Sigmoid colon (tissue), 7 donors: ENCODE measurements at regions of chr6 and their contacts with region 1.

Region 1: DNA sequence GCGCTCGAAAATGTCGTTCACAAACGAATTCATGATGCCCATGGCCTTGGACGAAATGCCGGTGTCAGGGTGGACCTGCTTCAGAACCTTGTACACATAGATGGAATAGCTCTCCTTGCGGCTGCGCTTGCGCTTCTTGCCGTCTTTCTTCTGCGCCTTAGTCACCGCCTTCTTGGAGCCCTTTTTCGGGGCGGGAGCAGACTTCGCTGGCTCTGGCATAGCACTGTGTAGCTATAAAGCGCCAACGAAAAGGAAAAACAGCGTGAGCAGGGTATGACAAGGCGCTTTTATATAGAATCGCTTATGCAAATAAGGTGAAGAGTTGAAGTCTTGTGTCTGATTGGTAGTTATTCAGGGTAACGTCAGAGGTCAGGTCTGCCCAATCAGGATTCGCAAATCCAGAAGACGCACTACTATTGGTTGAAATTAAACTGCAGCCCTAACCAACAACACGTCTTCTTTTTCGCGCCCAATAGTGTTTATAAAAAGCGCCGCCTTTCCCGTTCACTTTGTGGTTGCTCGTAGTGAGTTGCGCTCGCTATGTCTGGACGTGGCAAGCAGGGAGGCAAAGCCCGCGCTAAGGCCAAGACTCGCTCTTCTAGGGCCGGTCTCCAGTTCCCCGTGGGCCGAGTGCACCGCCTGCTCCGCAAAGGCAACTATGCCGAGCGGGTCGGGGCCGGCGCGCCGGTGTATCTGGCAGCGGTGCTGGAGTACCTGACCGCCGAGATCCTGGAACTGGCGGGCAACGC is 114.8 kb upstream of the PRSS16 start:
- DNase-seq: peak; percentile 96
- H3K4me3 ChIP-seq: peak overlapping the region; percentile 38 to 55 (median 52)
- H3K27ac ChIP-seq: peak overlapping the region; percentile 87 to 95 (median 92)
- H3K4me1 ChIP-seq: peaks cover 0 to 22% (median 11%) of the 10 kb centered on the region in 4 donors
- H3K27me3 ChIP-seq: no peaks in the 10 kb centered on the region
- CTCF ChIP-seq: no peak
- EP300 ChIP-seq: no peak
- POLR2A ChIP-seq: peak; percentile 93 to 95

Region 2: DNA sequence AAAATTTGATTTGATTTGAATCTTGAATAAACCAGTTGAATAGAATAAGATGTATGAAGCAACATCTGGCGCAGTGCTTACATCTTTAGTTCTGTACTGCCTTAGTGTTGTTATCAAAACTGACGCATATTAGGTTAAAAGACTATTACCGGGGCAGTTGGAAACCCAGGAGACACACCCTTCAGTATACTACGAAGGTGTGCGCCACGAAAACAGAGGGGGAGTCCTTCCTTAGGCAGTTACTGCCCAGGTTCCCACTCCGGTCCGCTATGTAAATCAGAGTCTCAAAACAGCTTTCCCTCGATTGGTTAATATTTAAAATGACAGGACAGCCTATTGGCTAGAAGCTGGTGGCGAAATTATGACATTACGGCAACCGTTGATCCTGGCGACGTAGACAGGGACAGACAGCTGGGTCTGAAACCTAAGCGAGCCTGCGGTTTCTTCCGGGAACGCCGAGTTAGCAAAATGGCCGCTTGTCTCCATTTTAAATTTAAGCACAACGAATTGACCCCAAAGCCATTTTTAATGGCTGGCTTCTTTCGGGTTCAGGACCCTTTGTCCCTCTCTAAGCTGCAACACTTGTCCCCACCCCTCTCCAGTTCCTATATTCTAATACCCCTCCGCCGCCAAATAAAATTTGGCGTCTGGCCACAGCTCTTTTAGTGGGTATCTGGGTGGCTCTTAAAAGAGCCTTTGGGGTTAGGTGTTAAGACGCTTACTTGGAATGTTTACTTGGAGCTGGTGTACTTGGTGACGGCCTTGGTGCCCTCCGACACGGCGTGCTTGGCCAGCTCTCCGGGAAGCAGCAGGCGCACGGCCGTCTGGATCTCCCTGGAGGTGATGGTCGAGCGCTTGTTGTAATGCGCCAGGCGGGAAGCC is 1009.7 kb before region 1 on chr6:
- intact Hi-C with region 1: loop called (anchors 10 kb)
- DNase-seq: peak; percentile 98
- H3K4me3 ChIP-seq: peak overlapping the region; percentile 80 to 94 (median 90)
- H3K27ac ChIP-seq: peak overlapping the region; percentile 96 to 99 (median 98)
- H3K4me1 ChIP-seq: peaks cover 0 to 21% (median 17%) of the 10 kb centered on the region in 4 donors
- H3K27me3 ChIP-seq: no peaks in the 10 kb centered on the region
- CTCF ChIP-seq: no peak
- EP300 ChIP-seq: peak; percentile 72 to 92 (median 89)
- POLR2A ChIP-seq: peak; percentile 84 to 91

Region 3: GRCh38 chr6:26204332-26205165 is 928.2 kb before region 1 on chr6:
- intact Hi-C with region 1: loop called (anchors 10 kb)
- DNase-seq: peak; percentile 99
- H3K4me3 ChIP-seq: peak overlapping the region; percentile 61 to 75 (median 65)
- H3K27ac ChIP-seq: peak overlapping the region; percentile 95 to 98 (median 98)
- H3K4me1 ChIP-seq: peaks cover 0 to 29% (median 16%) of the 10 kb centered on the region in 4 donors
- H3K27me3 ChIP-seq: no peaks in the 10 kb centered on the region
- CTCF ChIP-seq: peak in 2 of 4 experiments; percentile 8 to 34
- EP300 ChIP-seq: peak in 3 of 4 donors; percentile 67 to 81 (median 81)
- POLR2A ChIP-seq: peak; percentile 99

Region 4: DNA sequence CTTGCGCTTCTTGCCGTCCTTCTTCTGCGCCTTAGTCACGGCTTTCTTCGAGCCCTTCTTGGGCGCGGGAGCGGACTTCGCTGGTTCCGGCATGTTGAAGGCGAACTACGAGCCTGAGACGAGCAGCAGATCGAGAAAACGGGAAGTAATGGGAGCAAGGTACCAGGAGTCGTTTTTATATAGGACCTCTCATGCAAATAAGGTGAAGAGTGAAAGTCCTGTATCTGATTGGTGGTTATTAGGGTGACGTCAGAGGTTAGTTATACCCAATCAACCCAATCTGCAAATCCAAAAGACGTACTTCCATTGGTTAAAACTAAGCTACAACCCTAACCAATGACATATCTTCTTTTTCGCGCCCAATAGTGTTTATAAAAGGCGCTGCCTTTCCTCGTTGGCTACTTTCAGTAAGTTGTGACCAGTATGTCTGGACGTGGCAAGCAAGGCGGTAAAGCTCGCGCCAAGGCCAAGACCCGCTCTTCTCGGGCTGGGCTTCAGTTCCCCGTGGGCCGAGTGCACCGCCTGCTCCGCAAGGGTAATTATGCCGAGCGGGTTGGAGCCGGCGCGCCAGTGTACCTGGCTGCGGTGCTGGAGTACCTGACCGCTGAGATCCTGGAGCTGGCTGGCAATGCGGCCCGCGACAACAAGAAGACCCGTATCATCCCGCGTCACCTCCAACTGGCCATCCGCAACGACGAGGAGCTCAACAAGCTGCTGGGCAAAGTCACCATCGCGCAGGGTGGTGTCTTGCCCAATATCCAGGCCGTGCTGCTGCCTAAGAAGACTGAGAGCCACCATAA is 14.2 kb after region 1 on chr6:
- intact Hi-C with region 1: loop called (anchors 2 kb)
- DNase-seq: peak; percentile 92
- H3K4me3 ChIP-seq: peak overlapping the region; percentile 50 to 59 (median 56)
- H3K27ac ChIP-seq: peak overlapping the region; percentile 86 to 94 (median 91)
- H3K4me1 ChIP-seq: peaks cover 0 to 26% (median 20%) of the 10 kb centered on the region in 4 donors
- H3K27me3 ChIP-seq: no peaks in the 10 kb centered on the region
- CTCF ChIP-seq: no peak
- EP300 ChIP-seq: peak in 1 of 4 donors; percentile 20
- POLR2A ChIP-seq: peak; percentile 95 to 96

Region 5: GRCh38 chr6:27479319-27480182 is 346.8 kb after region 1 on chr6:
- intact Hi-C with region 1: loop called (anchors 5 kb)
- DNase-seq: peak; percentile 91
- H3K4me3 ChIP-seq: peak overlapping the region; percentile 64 to 74 (median 68)
- H3K27ac ChIP-seq: peak overlapping the region; percentile 91 to 96 (median 95)
- H3K4me1 ChIP-seq: peaks cover 0 to 14% (median 9%) of the 10 kb centered on the region in 4 donors
- H3K27me3 ChIP-seq: no peaks in the 10 kb centered on the region
- CTCF ChIP-seq: no peak
- EP300 ChIP-seq: no peak
- POLR2A ChIP-seq: no peak

Region 6: DNA sequence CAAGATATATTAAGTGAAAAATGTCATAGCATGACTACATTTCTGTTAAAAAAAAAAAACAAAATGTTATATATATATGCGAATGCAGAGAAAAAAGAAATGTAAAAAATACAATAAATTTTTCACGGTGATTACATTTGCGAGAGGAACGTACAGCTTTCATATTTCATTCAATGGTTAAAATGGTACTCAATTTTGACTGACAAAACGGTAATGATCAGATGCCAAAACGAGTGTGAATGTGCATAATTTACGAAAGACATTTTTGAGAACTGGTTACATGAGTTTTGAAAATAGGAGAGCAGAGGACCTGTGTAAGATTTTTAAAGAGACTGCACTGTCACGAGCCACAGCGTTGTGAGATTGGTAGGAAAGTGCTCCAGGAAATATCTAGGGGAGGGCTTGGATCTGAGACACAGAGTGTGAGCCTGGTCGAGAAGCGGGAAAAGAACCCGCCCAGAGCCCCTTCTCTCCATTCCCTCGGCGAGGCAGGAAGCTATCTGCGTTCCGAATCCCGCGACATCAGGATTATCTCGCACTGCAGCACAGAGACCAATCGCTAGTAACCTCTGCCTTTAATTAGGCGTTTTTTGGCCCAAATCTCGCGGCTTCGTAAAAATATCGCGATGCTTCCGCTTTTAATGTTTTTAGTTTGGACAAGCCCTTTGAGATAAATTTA is 1762.6 kb after region 1 on chr6:
- intact Hi-C with region 1: loop called (anchors 10 kb)
- DNase-seq: peak; percentile 97
- H3K4me3 ChIP-seq: peak overlapping the region; percentile 58 to 76 (median 70)
- H3K27ac ChIP-seq: peak overlapping the region; percentile 96 to 99 (median 97)
- H3K4me1 ChIP-seq: peaks cover 0 to 16% (median 7%) of the 10 kb centered on the region in 4 donors
- H3K27me3 ChIP-seq: no peaks in the 10 kb centered on the region
- CTCF ChIP-seq: no peak
- EP300 ChIP-seq: no peak
- POLR2A ChIP-seq: peak; percentile 38 to 64